Naive thymus-derived CD4-positive, alpha-beta T cell (primary cell): ENCODE measurements at regions of chr19 and their contacts with region 1.

Region 1: GRCh38 chr19:16376649-16377048 is 52.0 kb downstream of the KLF2 start:
- DNase-seq: peak in 6 of 9 donors; percentile 30 to 55 (median 42)
- ATAC-seq: peak; percentile 49
- H3K4me3 ChIP-seq: no peak overlapping the region
- H3K4me3 Mint-ChIP-seq: peak overlapping the region in 4 of 10 donors; percentile 32 to 82 (median 69)
- H3K27ac ChIP-seq: peak overlapping the region; percentile 64
- H3K27ac Mint-ChIP-seq: peak overlapping the region in 4 of 9 donors; percentile 76 to 99 (median 96)
- H3K4me1 ChIP-seq: peaks cover 75 to 91% of the 10 kb centered on the region in 2 donors
- H3K4me1 Mint-ChIP-seq: peaks cover 16 to 90% (median 63%) of the 10 kb centered on the region in 7 donors
- H3K27me3 ChIP-seq: no peaks in the 10 kb centered on the region
- H3K27me3 Mint-ChIP-seq: peaks cover 0 to 2% (median 0%) of the 10 kb centered on the region in 5 donors

Region 2: GRCh38 chr19:16247353-16248182 is 129.1 kb before region 1 on chr19:
- CTCF ChIA-PET with region 1: interaction called, 85 read pairs
- POLR2A ChIA-PET with region 1: interaction called, 88 read pairs
- intact Hi-C with region 1: no loop called
- DNase-seq: peak; percentile 60 to 89 (median 77)
- ATAC-seq: peak; percentile 95
- H3K4me3 ChIP-seq: no peak overlapping the region
- H3K4me3 Mint-ChIP-seq: peak overlapping the region; percentile 22 to 71 (median 56)
- H3K27ac ChIP-seq: no peak overlapping the region
- H3K27ac Mint-ChIP-seq: peak overlapping the region; percentile 48 to 94 (median 84)
- H3K4me1 ChIP-seq: peaks cover 15 to 24% of the 10 kb centered on the region in 2 donors
- H3K4me1 Mint-ChIP-seq: peaks cover 17 to 38% (median 36%) of the 10 kb centered on the region in 7 donors
- H3K27me3 ChIP-seq: no peaks in the 10 kb centered on the region
- H3K27me3 Mint-ChIP-seq: peaks cover 0 to 7% (median 0%) of the 10 kb centered on the region in 5 donors

Region 3: GRCh38 chr19:16702118-16702517 is 325.5 kb after region 1 on chr19:
- CTCF ChIA-PET with region 1: no interaction called
- POLR2A ChIA-PET with region 1: no interaction called
- intact Hi-C with region 1: no loop called
- DNase-seq: no peak
- ATAC-seq: no peak
- H3K4me3 ChIP-seq: no peak overlapping the region
- H3K4me3 Mint-ChIP-seq: no peak overlapping the region
- H3K27ac ChIP-seq: no peak overlapping the region
- H3K27ac Mint-ChIP-seq: no peak overlapping the region
- H3K4me1 ChIP-seq: no peaks in the 10 kb centered on the region
- H3K4me1 Mint-ChIP-seq: no peaks in the 10 kb centered on the region
- H3K27me3 ChIP-seq: no peaks in the 10 kb centered on the region
- H3K27me3 Mint-ChIP-seq: no peaks in the 10 kb centered on the region

Region 4: GRCh38 chr19:18224525-18225354 is 1848.1 kb after region 1 on chr19:
- CTCF ChIA-PET with region 1: no interaction called
- POLR2A ChIA-PET with region 1: no interaction called
- intact Hi-C with region 1: no loop called
- DNase-seq: peak; percentile 65 to 87 (median 80)
- ATAC-seq: peak; percentile 98
- H3K4me3 ChIP-seq: peak overlapping the region; percentile 46
- H3K4me3 Mint-ChIP-seq: peak overlapping the region; percentile 80 to 90 (median 87)
- H3K27ac ChIP-seq: no peak overlapping the region
- H3K27ac Mint-ChIP-seq: peak overlapping the region in 2 of 9 donors; percentile 41 to 68
- H3K4me1 ChIP-seq: peaks cover 6 to 16% of the 10 kb centered on the region in 2 donors
- H3K4me1 Mint-ChIP-seq: peaks cover 11 to 25% (median 20%) of the 10 kb centered on the region in 7 donors
- H3K27me3 ChIP-seq: peaks cover 12 to 28% of the 10 kb centered on the region in 2 donors
- H3K27me3 Mint-ChIP-seq: peaks cover 43 to 66% (median 56%) of the 10 kb centered on the region in 5 donors